Activated CD4-positive, alpha-beta T cell treated with anti-CD3 and anti-CD28 coated beads, Interleukin-2, amount 10 ng/mL, durations not matched to agents 24 days and 14 days (primary cell): ENCODE measurements at regions of chr9 and their contacts with region 1.

Region 1: GRCh38 chr9:26129217-26129616 is 451.0 kb upstream of the TUSC1 start:
- DNase-seq: no peak
- H3K4me3 Mint-ChIP-seq: no peak overlapping the region
- H3K27ac Mint-ChIP-seq: no peak overlapping the region
- H3K4me1 Mint-ChIP-seq: no peaks in the 10 kb centered on the region
- H3K27me3 Mint-ChIP-seq: no peaks in the 10 kb centered on the region

Region 2: GRCh38 chr9:26181836-26182235 is 52.6 kb after region 1 on chr9:
- intact Hi-C with region 1: loop called (anchors 10 kb)
- DNase-seq: no peak
- H3K4me3 Mint-ChIP-seq: no peak overlapping the region
- H3K27ac Mint-ChIP-seq: no peak overlapping the region
- H3K4me1 Mint-ChIP-seq: no peaks in the 10 kb centered on the region
- H3K27me3 Mint-ChIP-seq: no peaks in the 10 kb centered on the region